MCF 10A (cell line): ENCODE measurements at regions of chr18 and their contacts with region 1.

Region 1: DNA sequence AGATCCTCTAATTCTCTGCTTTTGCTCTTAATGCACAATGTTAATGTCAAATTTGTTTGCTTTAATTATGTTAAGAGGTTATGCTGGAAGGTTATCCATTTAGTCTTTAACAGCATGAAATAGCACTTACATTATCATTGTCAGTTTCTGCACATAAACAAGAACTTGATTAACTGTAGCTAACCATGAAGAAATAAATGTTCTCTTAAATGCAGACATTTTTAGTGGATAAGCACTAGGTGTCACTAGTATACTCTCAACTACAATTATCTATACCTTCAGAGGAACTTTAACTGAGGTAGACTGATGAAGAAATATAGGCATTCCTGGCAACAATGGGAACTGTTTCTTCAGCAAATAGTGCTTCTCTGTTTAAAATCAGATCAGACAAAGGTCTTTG is 178.8 kb upstream of the CHST9 start:
- DNase-seq: peak; percentile 34
- H3K4me3 Mint-ChIP-seq: no peak overlapping the region
- H3K27ac Mint-ChIP-seq: no peak overlapping the region
- H3K4me1 Mint-ChIP-seq: no peaks in the 10 kb centered on the region
- H3K27me3 Mint-ChIP-seq: peaks cover 14% of the 10 kb centered on the region
- CTCF ChIP-seq: peak; percentile 39

Region 2: GRCh38 chr18:27378431-27379095 is 14.7 kb after region 1 on chr18:
- CTCF ChIA-PET with region 1: interaction called, 22 read pairs
- POLR2A ChIA-PET with region 1: interaction called, 6 read pairs
- intact Hi-C with region 1: no loop called
- DNase-seq: peak; percentile 90
- H3K4me3 Mint-ChIP-seq: no peak overlapping the region
- H3K27ac Mint-ChIP-seq: peak overlapping the region; percentile 77
- H3K4me1 Mint-ChIP-seq: peaks cover 11% of the 10 kb centered on the region
- H3K27me3 Mint-ChIP-seq: no peaks in the 10 kb centered on the region
- CTCF ChIP-seq: no peak

Region 3: GRCh38 chr18:27599202-27599829 is 235.4 kb after region 1 on chr18:
- CTCF ChIA-PET with region 1: interaction called, 75 read pairs
- POLR2A ChIA-PET with region 1: interaction called, 5 read pairs
- intact Hi-C with region 1: loop called (anchors 1 kb)
- DNase-seq: peak; percentile 65
- H3K4me3 Mint-ChIP-seq: no peak overlapping the region
- H3K27ac Mint-ChIP-seq: no peak overlapping the region
- H3K4me1 Mint-ChIP-seq: peaks cover under 1% of the 10 kb centered on the region
- H3K27me3 Mint-ChIP-seq: peaks cover 3% of the 10 kb centered on the region
- CTCF ChIP-seq: peak; percentile 81

Region 4: GRCh38 chr18:27685807-27686412 is 322.0 kb after region 1 on chr18:
- CTCF ChIA-PET with region 1: no interaction called
- POLR2A ChIA-PET with region 1: no interaction called
- intact Hi-C with region 1: loop called (anchors 5 kb)
- DNase-seq: peak; percentile 48
- H3K4me3 Mint-ChIP-seq: no peak overlapping the region
- H3K27ac Mint-ChIP-seq: no peak overlapping the region
- H3K4me1 Mint-ChIP-seq: no peaks in the 10 kb centered on the region
- H3K27me3 Mint-ChIP-seq: no peaks in the 10 kb centered on the region
- CTCF ChIP-seq: peak; percentile 59